GM13976 (cell line): ENCODE measurements at regions of chr15 and their contacts with region 1.

Region 1: GRCh38 chr15:90654233-90655124 is 62.7 kb upstream of the BLM start:
- DNase-seq: no peak
- CTCF ChIP-seq: no peak

Region 2: DNA sequence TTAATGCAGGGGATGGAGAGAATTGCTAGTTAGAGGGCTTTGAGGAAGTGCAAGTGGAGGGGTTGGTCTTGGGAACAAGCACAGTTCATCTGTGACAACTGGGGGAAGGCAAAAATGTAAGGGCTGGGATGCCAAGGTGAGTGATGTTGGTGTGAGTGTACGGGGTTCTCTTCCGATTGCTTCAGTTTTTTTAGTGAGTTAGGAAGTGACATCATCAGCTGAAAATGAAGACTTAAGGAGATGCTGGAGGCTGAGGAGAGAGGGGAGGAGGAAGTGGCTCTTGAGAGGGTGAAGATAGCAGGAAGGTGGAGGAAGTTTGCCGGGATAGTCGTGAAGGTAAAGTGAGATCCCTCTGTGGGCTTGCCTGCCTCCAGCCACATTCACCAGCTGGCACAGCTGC is 1066.5 kb before region 1 on chr15:
- in situ Hi-C with region 1: no loop called
- DNase-seq: no peak
- CTCF ChIP-seq: no peak

Region 3: DNA sequence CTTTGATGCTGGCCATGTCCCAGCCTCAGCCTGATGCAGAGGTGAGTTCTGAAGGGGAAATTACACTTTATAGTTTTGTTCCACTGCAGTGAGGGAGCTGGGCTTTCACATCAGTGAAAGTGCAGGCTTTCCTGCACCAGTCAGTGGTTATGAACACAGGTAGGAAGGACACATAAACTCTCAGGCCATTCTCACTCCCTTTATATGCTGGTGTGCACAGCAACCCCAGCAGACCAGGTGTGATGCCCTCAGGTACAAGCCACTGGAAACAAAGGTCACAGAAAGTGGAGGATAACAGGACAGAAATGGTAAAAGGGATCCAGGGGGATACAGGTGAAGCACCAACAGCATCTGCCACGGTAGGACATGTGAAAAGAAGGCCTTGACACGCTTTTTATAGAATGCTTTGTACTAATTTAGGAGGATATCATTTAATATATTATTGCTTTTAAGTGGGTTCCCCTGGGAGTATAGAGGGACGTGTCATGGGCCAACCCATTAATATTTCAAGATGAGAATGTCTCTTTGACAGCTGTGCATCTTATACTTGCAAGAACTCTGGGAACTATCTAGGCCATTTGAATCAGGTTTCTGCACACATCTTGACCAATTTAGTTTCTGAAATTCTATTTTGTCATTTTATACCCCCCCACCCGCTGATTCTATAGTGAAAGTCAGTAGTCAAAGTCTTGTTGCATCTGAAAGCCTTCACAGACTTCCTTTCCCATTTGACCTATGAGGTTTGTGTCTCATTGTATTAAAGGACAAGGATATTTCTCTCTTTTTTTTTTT is 37.7 kb after region 1 on chr15:
- in situ Hi-C with region 1: loop called (anchors 5 kb)
- DNase-seq: peak; percentile 58
- CTCF ChIP-seq: no peak

Region 4: GRCh38 chr15:91165850-91166249 is 511.4 kb after region 1 on chr15:
- in situ Hi-C with region 1: no loop called
- DNase-seq: no peak
- CTCF ChIP-seq: no peak